ENCODE measurements at regions of chr17 and their contacts with region 1.

Region 1: DNA sequence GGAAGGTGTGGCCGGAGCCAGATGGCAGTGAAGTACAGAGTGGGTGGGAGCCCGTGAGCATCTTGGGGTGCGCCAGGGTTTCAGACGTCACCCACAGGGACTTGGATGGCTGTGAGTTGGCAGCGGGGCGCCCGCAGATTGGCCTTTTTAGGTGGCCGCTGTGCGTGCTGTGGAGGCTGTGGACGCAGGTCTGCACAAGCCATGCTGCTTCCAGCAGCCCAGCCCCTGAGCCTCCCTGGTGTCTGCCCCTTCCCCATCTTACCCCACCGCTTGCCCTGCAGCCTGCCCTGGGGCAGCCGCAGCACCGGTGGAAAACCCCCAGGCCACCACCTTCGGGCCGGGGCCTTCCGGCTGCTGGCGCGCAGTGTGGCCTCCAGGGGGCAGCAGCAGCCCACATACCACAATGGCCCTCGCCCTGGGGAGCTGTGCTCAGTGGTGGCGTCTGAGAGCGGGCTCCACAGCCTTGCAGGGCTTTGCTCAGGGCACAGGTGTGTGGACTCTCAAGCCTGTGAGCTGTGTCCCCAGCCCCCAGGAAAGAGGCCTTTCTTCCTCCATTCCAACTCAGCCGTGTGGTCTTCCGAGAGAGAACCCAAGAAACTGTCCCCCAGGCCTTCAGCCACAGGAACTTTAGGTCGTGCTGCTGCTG is 11.8 kb downstream of the ENDOV start:
- DNase-seq: peak; percentile 93
- ATAC-seq: peak; percentile 90
- H3K4me3 Mint-ChIP-seq: no peak overlapping the region
- H3K27ac Mint-ChIP-seq: no peak overlapping the region
- H3K4me1 Mint-ChIP-seq: 0 out of 2 replicates have a peak, but pooled peaks cover 3% of the 10 kb centered on the region
- H3K27me3 Mint-ChIP-seq: no peaks in the 10 kb centered on the region; the same call in 1 of the 2 replicates
- CTCF ChIP-seq: peak; percentile 93

Region 2: GRCh38 chr17:80414803-80415625 is 11.8 kb before region 1 on chr17 and contains the start of gene ENDOV:
- CTCF ChIA-PET with region 1: interaction called, 13 read pairs
- POLR2A ChIA-PET with region 1: no interaction called
- DNase-seq: peak; percentile 90
- ATAC-seq: peak; percentile 89
- H3K4me3 Mint-ChIP-seq: peak within 1 kb of the TSS; percentile 89
- H3K27ac Mint-ChIP-seq: peak within 1 kb of the TSS; percentile 70; the same call in 1 of the 2 replicates
- H3K4me1 Mint-ChIP-seq: peaks cover 9% of the 10 kb centered on the region
- H3K27me3 Mint-ChIP-seq: peaks cover 28% of the 10 kb centered on the region
- CTCF ChIP-seq: no peak
- total RNA-seq, gene ENDOV: 18.1 to 25.2 TPM (median 20.6 TPM) in 3 replicates

Region 3: DNA sequence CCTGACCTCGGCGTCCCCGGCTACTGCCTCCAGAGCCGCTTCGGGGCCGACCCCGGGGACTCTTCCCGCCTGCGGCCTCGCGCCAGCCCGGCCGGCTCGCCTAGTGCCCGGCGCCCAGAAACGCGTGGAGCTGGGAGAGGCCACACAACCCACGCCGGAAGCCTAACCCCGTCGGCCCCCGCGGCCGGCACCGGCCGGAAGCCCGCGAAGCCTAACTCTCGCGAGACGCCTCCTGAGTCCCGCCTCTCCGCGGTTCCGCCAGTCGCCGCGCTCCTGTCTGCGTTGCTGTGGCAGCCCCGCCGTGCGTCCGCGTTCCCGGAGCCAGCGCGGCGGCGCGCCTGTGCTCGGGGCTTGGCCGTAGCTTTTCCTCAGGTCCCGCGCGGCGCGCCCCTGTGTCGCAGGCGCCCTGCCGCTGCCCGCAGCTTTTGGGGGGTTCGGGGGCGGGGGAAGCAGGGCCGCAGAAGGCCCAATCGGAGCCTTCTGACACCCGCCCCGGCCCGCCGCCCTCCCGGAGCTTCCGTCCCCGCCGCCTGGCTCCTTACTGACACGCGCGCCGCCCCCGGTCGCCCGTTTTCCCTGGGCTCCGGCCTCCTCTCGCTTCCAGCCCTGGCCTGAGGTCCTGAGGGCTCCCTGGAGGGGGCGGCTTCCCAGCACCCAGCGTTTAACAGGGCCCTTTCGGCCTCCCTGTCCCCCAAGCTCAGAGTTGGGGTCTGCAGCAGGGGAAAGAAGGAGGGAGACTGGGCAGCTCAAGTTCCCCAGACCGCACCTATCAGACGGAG is 27.9 kb after region 1 on chr17:
- CTCF ChIA-PET with region 1: interaction called, 24 read pairs
- POLR2A ChIA-PET with region 1: no interaction called
- DNase-seq: peak; percentile 96
- ATAC-seq: peak; percentile 88
- H3K4me3 Mint-ChIP-seq: peak overlapping the region; percentile 91
- H3K27ac Mint-ChIP-seq: peak overlapping the region; percentile 95
- H3K4me1 Mint-ChIP-seq: peaks cover 15% of the 10 kb centered on the region
- H3K27me3 Mint-ChIP-seq: peaks cover 37% of the 10 kb centered on the region
- CTCF ChIP-seq: no peak

Region 4: GRCh38 chr17:80477647-80478478 is 51.1 kb after region 1 on chr17:
- CTCF ChIA-PET with region 1: interaction called, 23 read pairs
- POLR2A ChIA-PET with region 1: no interaction called
- DNase-seq: peak; percentile 72
- ATAC-seq: peak; percentile 34
- H3K4me3 Mint-ChIP-seq: no peak overlapping the region
- H3K27ac Mint-ChIP-seq: no peak overlapping the region
- H3K4me1 Mint-ChIP-seq: peaks cover 18% of the 10 kb centered on the region
- H3K27me3 Mint-ChIP-seq: peaks cover 82% of the 10 kb centered on the region
- CTCF ChIP-seq: no peak

Region 5: DNA sequence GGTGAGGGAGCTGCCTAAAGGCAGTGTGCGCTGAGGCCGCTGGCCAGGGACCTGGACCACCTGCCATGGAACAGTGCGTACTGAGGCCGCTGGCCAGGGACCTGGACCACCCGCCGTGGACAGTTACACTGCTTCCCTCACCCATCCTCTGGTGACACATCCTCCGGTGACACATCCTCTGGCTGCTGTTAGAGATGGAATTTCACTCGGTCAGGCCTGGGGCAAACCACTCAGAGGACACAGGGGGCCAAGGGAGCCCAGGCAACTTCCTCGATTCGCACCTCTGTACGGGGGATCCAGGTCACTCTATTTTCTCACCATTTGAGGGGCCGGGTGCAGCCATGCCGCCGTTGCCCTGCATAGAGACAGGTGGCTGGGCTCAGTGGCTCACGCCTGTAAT is 85.4 kb after region 1 on chr17:
- CTCF ChIA-PET with region 1: interaction called, 34 read pairs
- POLR2A ChIA-PET with region 1: no interaction called
- DNase-seq: no peak
- ATAC-seq: no peak
- H3K4me3 Mint-ChIP-seq: no peak overlapping the region
- H3K27ac Mint-ChIP-seq: no peak overlapping the region
- H3K4me1 Mint-ChIP-seq: no peaks in the 10 kb centered on the region
- H3K27me3 Mint-ChIP-seq: peaks cover 2% of the 10 kb centered on the region; the same call in 1 of the 2 replicates
- CTCF ChIP-seq: no peak

Region 6: DNA sequence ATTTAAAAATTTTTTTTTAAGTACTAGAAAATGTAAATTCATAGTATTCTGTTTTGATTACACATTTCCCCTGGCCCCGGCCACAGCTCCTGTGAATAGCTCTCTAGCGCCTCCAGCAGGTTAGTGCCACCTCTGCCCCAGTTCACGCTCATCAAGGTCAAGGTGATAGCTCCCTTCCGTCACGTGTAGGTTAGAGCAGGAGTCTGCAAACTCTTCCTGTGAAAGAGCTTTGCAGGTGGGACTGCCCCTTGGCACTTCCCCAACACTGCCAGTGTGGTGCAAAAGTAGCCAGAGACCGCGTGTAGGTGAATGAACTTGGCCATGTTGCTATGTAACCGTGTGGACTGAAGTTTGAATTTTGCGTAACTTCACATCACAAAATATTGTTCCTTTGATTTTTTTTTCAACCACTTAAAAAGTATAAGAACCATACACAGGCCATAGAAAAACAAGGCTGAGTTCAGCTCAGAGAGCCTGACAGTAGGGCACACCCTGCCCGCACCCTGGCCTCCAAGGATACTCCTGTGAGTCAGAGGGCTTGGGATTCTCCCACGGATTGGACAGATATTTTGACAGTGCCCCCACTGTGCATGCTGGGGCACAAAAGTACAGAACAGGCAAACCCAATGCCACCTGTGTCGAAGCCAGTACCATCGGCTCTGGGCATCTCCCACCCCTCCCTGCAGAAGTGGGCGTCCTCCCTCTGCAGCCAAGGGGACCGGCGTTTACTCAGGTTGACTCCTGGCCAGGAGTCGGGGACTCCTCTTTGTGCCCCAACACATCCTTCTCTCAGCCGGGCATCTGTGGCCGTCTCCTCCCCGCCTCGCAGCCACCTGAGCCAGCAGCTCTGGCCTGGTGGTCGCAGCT is 472.8 kb after region 1 on chr17:
- CTCF ChIA-PET with region 1: interaction called, 22 read pairs
- POLR2A ChIA-PET with region 1: interaction called, 3 read pairs
- DNase-seq: peak; percentile 85
- ATAC-seq: peak; percentile 88
- H3K4me3 Mint-ChIP-seq: no peak overlapping the region
- H3K27ac Mint-ChIP-seq: no peak overlapping the region
- H3K4me1 Mint-ChIP-seq: no peaks in the 10 kb centered on the region
- H3K27me3 Mint-ChIP-seq: no peaks in the 10 kb centered on the region
- CTCF ChIP-seq: peak; percentile 86; the same call in 1 of the 2 replicates